SK-N-SH (cell line): ENCODE measurements at regions of chr7 and their contacts with region 1.

Region 1: GRCh38 chr7:134690016-134690415 is 43.4 kb downstream of the BPGM start:
- DNase-seq: peak; percentile 50
- H3K4me3 ChIP-seq: no peak overlapping the region
- H3K27ac ChIP-seq: peak overlapping the region; percentile 82 to 88; a peak in 3 of 4 replicates
- H3K4me1 ChIP-seq: peaks cover 12 to 39% of the 10 kb centered on the region in 2 experiments
- H3K27me3 ChIP-seq: no peaks in the 10 kb centered on the region
- CTCF ChIP-seq: peak; percentile 95
- EP300 ChIP-seq: no peak
- RAD21 ChIP-seq: peak; percentile 88

Region 2: DNA sequence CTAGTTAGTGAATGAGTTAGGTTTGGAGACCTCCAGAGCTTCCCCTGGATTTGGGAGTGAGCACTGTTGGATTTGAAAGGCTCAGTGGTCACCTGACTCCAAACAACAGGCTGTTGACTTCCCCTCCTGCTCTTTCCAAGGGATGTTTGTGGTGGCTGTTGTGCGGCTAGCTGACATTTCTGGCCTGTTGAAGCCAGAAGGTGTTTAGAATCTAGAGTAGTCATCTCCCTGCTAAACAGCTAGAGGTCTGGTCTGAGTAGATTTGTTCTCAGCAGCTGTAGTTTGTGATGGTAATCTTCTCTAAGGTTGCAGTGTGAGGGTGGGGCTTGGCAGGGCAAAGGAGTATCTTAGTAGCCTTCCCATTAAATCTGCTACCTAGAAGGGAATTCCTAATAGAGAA is 13.3 kb before region 1 on chr7:
- CTCF ChIA-PET with region 1: interaction called, 18 read pairs
- POLR2A ChIA-PET with region 1: no interaction called
- DNase-seq: no peak
- H3K4me3 ChIP-seq: no peak overlapping the region
- H3K27ac ChIP-seq: no peak overlapping the region
- H3K4me1 ChIP-seq: peaks cover 0 to 4% of the 10 kb centered on the region in 2 experiments; a peak in 1 of 4 replicates
- H3K27me3 ChIP-seq: no peaks in the 10 kb centered on the region
- CTCF ChIP-seq: no peak
- EP300 ChIP-seq: no peak
- RAD21 ChIP-seq: no peak

Region 3: GRCh38 chr7:134804351-134804750 is 114.3 kb after region 1 on chr7:
- CTCF ChIA-PET with region 1: no interaction called
- POLR2A ChIA-PET with region 1: no interaction called
- DNase-seq: no peak
- H3K4me3 ChIP-seq: peak overlapping the region in 1 of 2 experiments; percentile 22; a peak in 1 of 4 replicates
- H3K27ac ChIP-seq: peak overlapping the region; percentile 84 to 85
- H3K4me1 ChIP-seq: peaks cover 0 to 24% of the 10 kb centered on the region in 2 experiments; a peak in 3 of 4 replicates
- H3K27me3 ChIP-seq: no peaks in the 10 kb centered on the region
- CTCF ChIP-seq: no peak
- EP300 ChIP-seq: peak; percentile 6 to 74; a peak in 1 of 4 replicates
- RAD21 ChIP-seq: no peak

Region 4: GRCh38 chr7:134891262-134891695 is 201.3 kb after region 1 on chr7:
- CTCF ChIA-PET with region 1: interaction called, 10 read pairs
- POLR2A ChIA-PET with region 1: no interaction called
- DNase-seq: peak; percentile 88
- H3K4me3 ChIP-seq: peak overlapping the region; percentile 58 to 70
- H3K27ac ChIP-seq: peak overlapping the region; percentile 90 to 96
- H3K4me1 ChIP-seq: peaks cover 25 to 36% of the 10 kb centered on the region in 2 experiments
- H3K27me3 ChIP-seq: no peaks in the 10 kb centered on the region
- CTCF ChIP-seq: no peak
- EP300 ChIP-seq: 0 out of 4 replicates have a peak, but pooled peaks of 1 of the 2 experiments have one; percentile 33
- RAD21 ChIP-seq: no peak

Region 5: GRCh38 chr7:134943764-134944400 is 253.9 kb after region 1 on chr7:
- CTCF ChIA-PET with region 1: interaction called, 114 read pairs
- POLR2A ChIA-PET with region 1: no interaction called
- DNase-seq: peak; percentile 74
- H3K4me3 ChIP-seq: no peak overlapping the region
- H3K27ac ChIP-seq: no peak overlapping the region; a peak in 1 of 4 replicates
- H3K4me1 ChIP-seq: peaks cover 7 to 12% of the 10 kb centered on the region in 2 experiments; a peak in 2 of 4 replicates
- H3K27me3 ChIP-seq: no peaks in the 10 kb centered on the region
- CTCF ChIP-seq: peak; percentile 65
- EP300 ChIP-seq: no peak
- RAD21 ChIP-seq: peak; percentile 94

Region 6: GRCh38 chr7:134959810-134960209 is 269.8 kb after region 1 on chr7:
- CTCF ChIA-PET with region 1: interaction called, 42 read pairs
- POLR2A ChIA-PET with region 1: no interaction called
- DNase-seq: no peak
- H3K4me3 ChIP-seq: no peak overlapping the region
- H3K27ac ChIP-seq: no peak overlapping the region
- H3K4me1 ChIP-seq: no peaks in the 10 kb centered on the region
- H3K27me3 ChIP-seq: no peaks in the 10 kb centered on the region
- CTCF ChIP-seq: no peak
- EP300 ChIP-seq: no peak
- RAD21 ChIP-seq: no peak